T-cell (primary cell): ENCODE measurements at regions of chr4 and their contacts with region 1.

Region 1: DNA sequence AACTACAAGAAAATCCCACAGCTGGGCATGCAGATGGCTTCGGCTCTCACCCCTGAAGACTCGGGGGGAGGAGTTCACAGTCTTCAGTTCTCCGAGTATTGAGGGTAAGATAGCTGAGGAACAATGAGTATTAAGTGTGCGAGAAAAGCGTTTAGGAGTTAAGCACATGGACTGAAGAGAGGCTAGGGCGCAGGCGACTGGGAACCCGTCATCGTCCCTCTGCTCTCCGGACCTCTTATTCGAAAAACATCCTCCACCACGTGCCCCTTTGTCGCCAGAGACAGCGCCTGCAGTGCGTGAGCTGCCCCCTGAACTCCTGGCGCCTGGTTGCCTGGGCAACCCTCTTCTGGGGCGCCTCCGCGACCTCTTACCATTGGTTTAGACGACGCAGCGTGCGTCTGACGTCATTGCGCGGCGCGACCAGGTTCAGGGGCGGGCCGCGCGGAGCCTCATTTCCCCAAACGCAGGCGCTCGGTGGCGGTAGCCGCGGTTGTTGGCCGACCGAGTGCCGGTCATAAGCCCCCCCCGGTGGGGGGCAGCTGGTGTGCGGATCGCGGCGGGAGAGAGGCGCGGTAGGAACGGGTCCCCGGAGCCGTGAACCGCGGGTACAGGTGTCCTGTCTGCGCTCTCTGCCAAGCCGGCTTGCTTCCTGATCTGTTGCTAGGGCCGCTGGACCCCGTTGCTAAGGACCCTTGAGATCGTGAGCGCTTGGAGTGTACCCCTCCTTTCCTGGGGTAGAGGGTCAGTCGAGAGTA is at the start of gene PACRGL:
- DNase-seq: peak; percentile 84 to 96 (median 92)
- ATAC-seq: peak; percentile 97 to 99 (median 98)
- H3K4me3 ChIP-seq: peak within 1 kb of the TSS; percentile 85 to 90
- H3K4me3 Mint-ChIP-seq: peak within 1 kb of the TSS; percentile 90 to 97 (median 93)
- H3K27ac ChIP-seq: peak within 1 kb of the TSS; percentile 82
- H3K27ac Mint-ChIP-seq: peak within 1 kb of the TSS; percentile 81 to 94
- H3K4me1 ChIP-seq: peaks cover 10 to 13% of the 10 kb centered on the region in 2 experiments
- H3K4me1 Mint-ChIP-seq: peaks cover 43 to 46% (median 44%) of the 10 kb centered on the region in 3 donors
- H3K27me3 ChIP-seq: no peaks in the 10 kb centered on the region
- H3K27me3 Mint-ChIP-seq: peaks cover 5% of the 10 kb centered on the region in 2 donors
- total RNA-seq, gene PACRGL: 11.6 to 15.1 (median 13.4) TPM

Region 2: DNA sequence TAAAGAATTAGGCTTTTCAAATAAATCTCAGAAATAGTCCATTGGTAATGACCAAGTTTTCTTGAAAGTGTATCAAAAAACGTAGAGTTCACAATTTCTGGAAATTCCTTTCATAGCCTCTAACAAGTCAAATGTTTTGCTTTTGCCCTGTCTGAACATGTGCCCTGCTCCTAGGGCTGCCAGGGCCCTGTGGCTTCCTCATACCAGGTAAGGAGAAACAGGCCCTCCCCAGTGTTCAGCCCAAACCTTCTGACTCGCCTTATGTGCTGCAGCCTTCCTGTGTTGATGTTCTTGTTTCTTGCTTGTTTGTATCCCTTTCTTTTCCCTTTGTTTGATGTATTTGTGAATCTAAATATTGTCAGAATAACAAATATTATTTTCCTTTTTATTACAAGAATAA is 146.1 kb before region 1 on chr4:
- CTCF ChIA-PET with region 1: no interaction called
- POLR2A ChIA-PET with region 1: no interaction called
- DNase-seq: no peak
- ATAC-seq: no peak
- H3K4me3 ChIP-seq: no peak overlapping the region
- H3K4me3 Mint-ChIP-seq: no peak overlapping the region
- H3K27ac ChIP-seq: no peak overlapping the region
- H3K27ac Mint-ChIP-seq: no peak overlapping the region
- H3K4me1 ChIP-seq: no peaks in the 10 kb centered on the region
- H3K4me1 Mint-ChIP-seq: no peaks in the 10 kb centered on the region
- H3K27me3 ChIP-seq: no peaks in the 10 kb centered on the region
- H3K27me3 Mint-ChIP-seq: peaks cover 2 to 4% of the 10 kb centered on the region in 2 donors

Region 3: DNA sequence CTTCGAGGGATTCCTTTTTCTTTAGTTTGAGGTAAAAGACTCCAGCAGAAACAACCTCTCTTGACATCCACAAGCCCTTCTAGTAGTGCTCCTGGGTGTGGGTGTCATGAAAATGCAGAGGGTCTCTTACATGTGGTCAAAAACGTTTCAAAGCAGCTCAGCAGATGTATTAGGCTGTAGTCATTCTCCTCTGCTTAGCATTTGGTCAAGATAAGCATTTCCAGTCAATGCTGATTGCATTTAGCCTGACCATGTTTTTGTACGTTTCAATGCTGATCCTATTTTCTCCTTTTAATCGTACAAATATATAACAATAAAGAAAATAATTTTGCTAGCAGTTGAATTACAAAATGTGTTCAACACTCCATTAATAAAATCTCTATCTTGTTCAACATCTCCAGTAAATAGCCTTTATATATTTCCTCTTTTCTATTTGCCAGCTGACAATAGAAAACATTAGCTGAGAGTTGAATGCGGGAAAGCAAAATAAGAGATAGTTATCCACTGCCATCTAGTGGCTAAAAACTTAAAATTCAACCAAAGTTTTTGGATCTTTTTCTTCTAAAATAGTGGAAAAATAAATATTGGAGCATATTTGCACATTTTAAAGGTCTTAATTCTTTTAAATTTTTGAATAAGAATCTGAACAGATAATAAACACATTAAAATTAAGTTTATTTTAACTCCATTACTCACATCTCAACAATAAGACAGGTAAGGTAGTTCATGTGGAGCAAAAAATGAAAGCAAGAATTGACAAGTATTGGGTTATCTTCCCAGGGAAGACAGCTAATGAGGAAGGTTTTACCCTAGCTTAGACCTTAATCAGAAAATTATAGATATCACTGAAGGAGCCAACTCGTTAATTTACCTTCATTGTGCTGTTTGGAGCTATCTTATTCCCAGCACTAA is 15.1 kb before region 1 on chr4:
- CTCF ChIA-PET with region 1: interaction called, 6 to 10 read pairs
- POLR2A ChIA-PET with region 1: no interaction called
- DNase-seq: peak in 1 of 35 experiments; percentile 41
- ATAC-seq: no peak
- H3K4me3 ChIP-seq: no peak overlapping the region
- H3K4me3 Mint-ChIP-seq: no peak overlapping the region
- H3K27ac ChIP-seq: no peak overlapping the region
- H3K27ac Mint-ChIP-seq: no peak overlapping the region
- H3K4me1 ChIP-seq: no peaks in the 10 kb centered on the region
- H3K4me1 Mint-ChIP-seq: no peaks in the 10 kb centered on the region
- H3K27me3 ChIP-seq: peaks cover 0 to 3% of the 10 kb centered on the region in 2 experiments
- H3K27me3 Mint-ChIP-seq: peaks cover 11 to 17% of the 10 kb centered on the region in 2 donors